Activated B cell treated with CpG ODN at 0.5 μM for 24 hours (primary cell): ENCODE measurements at regions of chr2 and their contacts with region 1.

Region 1: DNA sequence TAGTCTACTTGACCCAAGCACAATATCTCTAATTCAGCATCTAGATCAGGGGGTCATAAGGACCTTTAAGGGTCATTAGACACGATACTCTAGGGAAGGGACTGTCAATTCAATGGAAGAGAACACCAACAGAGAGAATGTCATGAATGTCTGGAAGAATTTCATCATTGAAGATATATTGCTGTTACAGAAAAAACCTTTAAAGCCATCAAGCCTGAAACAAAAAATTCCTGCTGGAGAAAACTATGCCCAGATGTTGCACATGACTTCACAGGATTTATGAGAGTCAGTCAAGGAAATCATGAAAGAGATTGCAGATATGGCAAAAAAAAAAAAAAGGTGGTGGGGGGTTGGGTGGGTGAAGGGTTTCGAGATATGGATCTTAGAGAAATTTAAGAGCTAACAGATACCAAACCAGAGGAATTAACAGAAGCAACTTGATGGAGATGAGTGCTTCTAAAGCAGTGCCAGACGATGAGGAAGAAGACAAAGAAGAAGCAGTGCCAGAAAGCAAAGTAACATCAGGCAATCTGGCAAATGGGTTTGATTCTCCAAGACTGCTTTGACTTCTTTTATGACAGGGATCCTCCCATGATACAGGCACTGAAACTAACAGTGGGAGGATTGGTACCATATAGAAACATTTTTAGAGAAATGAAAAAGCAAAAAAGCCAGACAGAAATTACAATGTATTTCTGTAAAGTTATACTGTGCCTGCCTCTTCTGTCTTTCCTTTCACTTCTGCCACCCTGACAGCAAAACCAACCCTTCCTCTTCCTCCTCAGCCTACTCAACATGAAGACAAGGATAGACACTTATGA is 28.6 kb downstream of the MAP4K3 start:
- DNase-seq: no peak
- ATAC-seq: peak; percentile 52
- H3K4me3 Mint-ChIP-seq: no peak overlapping the region
- H3K27ac Mint-ChIP-seq: peak overlapping the region; percentile 19
- H3K4me1 Mint-ChIP-seq: peaks cover 45% of the 10 kb centered on the region
- H3K27me3 Mint-ChIP-seq: no peaks in the 10 kb centered on the region
- CTCF ChIP-seq: no peak

Region 2: DNA sequence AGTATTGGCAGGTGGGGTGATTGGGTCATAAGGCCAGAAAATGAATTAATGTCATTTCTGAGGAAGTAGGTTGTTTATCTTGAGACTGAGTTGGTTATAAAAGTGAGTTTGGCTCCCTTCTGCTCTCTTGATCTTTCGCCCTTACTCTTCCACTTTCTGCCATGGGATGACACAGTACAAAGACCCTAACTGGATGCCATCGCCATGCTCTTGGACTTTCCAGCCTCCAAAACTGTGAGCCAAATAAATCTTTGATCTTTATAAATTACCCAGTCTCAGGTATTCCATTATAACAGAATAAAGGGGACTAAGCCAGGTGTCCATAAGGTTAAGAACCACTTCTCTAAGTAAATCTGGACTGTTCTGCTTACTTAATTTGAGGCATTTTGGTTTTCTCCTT is 15.9 kb before region 1 on chr2:
- CTCF ChIA-PET with region 1: no interaction called
- POLR2A ChIA-PET with region 1: no interaction called
- intact Hi-C with region 1: loop called (anchors 2 kb)
- DNase-seq: no peak
- ATAC-seq: no peak
- H3K4me3 Mint-ChIP-seq: no peak overlapping the region
- H3K27ac Mint-ChIP-seq: no peak overlapping the region
- H3K4me1 Mint-ChIP-seq: peaks cover 3% of the 10 kb centered on the region
- H3K27me3 Mint-ChIP-seq: no peaks in the 10 kb centered on the region
- CTCF ChIP-seq: no peak

Region 3: DNA sequence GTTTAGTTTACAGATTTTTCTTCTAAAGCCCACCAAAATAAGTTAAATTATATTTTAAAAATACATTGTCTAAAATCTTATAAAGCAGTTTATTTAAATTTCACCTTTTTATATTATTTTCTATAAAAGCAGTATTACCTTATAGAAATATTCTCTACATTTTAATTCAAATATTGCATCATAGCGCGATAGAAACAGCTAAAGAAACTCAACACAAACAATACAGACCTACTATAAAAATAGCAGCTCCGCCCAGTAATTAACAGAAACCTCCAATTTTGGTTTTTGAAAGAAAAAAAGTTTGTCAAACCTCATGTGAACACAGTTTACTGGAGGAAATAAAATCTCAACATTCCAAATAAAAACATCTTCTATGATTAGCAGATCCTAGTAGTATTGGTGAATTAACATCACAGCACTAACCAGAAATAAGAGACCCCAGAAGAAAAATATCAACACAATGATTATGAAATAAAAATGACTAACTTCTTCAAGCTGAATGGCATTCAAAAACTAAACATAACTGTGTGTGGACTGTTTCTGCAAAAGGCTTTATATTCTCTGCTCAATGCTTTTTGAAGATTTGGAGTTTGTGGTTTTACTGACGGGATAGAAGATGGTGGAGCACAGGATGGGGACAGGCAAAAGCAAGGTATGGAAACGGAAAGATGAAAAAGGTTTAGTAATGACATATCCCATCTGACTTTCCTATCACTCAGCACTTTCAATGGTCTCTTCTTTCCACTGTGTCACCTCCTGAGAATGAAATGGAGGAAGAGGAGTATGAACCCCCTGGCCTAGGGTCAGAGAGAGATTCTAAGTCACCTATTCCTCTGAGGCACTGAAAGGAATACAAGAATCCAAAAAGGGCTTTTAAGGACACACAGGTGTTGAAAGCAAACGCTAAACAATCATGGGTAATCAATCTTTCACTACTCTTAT is 11.0 kb after region 1 on chr2:
- CTCF ChIA-PET with region 1: no interaction called
- POLR2A ChIA-PET with region 1: no interaction called
- intact Hi-C with region 1: no loop called
- DNase-seq: no peak
- ATAC-seq: no peak
- H3K4me3 Mint-ChIP-seq: no peak overlapping the region
- H3K27ac Mint-ChIP-seq: no peak overlapping the region
- H3K4me1 Mint-ChIP-seq: peaks cover 4% of the 10 kb centered on the region
- H3K27me3 Mint-ChIP-seq: no peaks in the 10 kb centered on the region
- CTCF ChIP-seq: no peak